HEK293 (cell line): ENCODE measurements at regions of chr6 and their contacts with region 1.

Region 1: GRCh38 chr6:132788658-132789395 is 9.6 kb downstream of the SLC18B1 start:
- H3K4me3 ChIP-seq: no peak overlapping the region
- H3K27ac ChIP-seq: no peak overlapping the region
- H3K4me1 ChIP-seq: no peaks in the 10 kb centered on the region
- CTCF ChIP-seq: no peak

Region 2: GRCh38 chr6:132424827-132425575 is 363.8 kb before region 1 on chr6:
- CTCF ChIA-PET with region 1: no interaction called
- POLR2A ChIA-PET with region 1: no interaction called
- H3K4me3 ChIP-seq: no peak overlapping the region
- H3K27ac ChIP-seq: no peak overlapping the region
- H3K4me1 ChIP-seq: no peaks in the 10 kb centered on the region
- CTCF ChIP-seq: no peak

Region 3: DNA sequence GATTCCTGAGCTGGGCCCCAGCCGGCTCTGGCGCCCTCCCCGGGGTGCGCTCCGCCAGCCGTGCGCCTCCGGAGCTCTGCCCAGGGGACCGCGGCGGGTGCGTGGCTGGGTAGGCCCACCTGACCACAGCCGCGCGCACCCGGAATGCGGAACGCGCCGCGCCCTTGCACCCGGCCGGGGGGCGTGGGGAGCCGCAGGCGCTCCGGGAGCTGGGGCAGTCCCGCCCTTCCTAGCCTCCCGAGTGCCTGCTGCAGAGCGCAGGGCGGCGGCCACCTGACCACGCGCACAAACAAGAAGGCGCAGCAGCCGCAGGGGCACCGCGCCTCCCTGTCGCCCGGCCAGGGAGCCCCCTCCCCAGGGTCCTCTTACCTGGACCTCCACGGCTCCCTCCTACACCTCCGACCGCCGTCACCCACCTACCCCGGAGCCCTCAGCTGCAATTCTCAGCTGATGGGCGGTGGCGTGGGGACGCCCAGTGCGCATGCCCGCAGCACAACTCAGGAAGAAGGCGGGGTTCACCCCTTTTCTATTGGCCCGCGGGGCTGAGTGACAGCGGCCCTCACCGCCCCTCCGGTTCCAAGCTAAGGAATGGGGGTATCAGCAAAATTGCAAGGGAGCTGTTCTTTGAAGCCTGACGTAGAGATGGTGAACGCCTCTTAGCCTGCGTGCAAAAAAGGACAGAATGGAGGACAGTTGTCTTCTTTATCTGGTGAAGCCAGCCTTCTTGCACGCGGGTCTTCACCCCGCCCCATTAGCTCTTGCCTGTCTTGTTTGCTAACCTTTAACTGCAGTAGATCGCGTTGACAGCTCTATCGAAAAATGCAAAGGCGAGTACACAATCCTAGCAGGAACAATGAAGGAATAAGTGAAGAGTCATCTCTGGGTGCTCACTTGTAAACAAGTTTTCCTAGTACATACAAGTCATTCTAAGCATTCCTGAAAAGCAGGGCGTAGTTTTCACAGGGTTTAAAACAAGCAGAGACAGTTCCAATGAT is 275.9 kb before region 1 on chr6 and contains the start of gene STX7:
- CTCF ChIA-PET with region 1: no interaction called
- POLR2A ChIA-PET with region 1: interaction called, 13 read pairs
- H3K4me3 ChIP-seq: peak within 1 kb of the TSS; percentile 85
- H3K27ac ChIP-seq: peak within 1 kb of the TSS; percentile 6; the same call in 1 of the 2 replicates
- H3K4me1 ChIP-seq: peaks cover 5% of the 10 kb centered on the region
- CTCF ChIP-seq: no peak